ENCODE measurements at regions of chr5 and their contacts with region 1.

Region 1: GRCh38 chr5:61817472-61818326 is 485.6 kb downstream of the ZSWIM6 start:
- DNase-seq: peak in 1 of 2 experiments; percentile 44
- H3K4me3 ChIP-seq: no peak overlapping the region
- H3K4me3 Mint-ChIP-seq: no peak overlapping the region
- H3K27ac Mint-ChIP-seq: no peak overlapping the region
- H3K4me1 ChIP-seq: peaks cover 10% of the 10 kb centered on the region
- H3K4me1 Mint-ChIP-seq: peaks cover 14% of the 10 kb centered on the region
- H3K27me3 ChIP-seq: no peaks in the 10 kb centered on the region; the same call in 1 of the 2 replicates
- H3K27me3 Mint-ChIP-seq: peaks cover 33% of the 10 kb centered on the region
- CTCF ChIP-seq: peak; percentile 73 to 75

Region 2: DNA sequence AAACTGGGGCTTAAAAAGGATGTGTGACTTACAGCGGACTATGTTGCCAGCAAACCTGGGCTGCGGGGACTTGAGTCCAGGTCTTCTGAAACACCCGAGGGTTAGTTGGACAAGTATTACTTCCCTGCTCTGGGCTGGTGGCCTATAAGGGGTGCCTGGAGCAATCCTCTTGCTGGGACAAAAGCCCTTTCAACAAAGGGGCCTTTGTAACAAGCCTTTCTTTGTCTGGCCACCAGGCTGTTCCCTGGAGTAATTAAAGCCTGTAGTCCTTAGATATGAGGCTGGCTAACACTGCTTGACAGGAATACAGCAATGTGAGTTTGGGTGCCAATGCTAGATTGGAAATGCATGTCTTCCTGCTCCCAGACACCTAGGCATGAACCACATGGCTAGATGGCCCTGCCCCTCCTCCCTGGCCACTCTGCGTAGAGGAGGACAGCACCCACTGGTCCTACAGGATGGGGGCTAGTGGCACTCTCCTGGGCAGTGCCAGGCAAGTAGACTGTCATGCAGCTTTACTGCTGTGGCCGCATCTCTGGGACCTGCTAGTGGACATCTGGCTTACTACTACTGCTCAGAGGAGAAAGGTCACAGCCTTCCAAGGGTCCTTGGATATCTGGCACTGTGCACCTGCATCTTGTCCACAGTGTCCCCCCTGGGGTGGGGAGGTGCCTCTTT is 142.5 kb before region 1 on chr5:
- CTCF ChIA-PET with region 1: no interaction called
- POLR2A ChIA-PET with region 1: no interaction called
- intact Hi-C with region 1: loop called (anchors 2 kb)
- DNase-seq: no peak
- H3K4me3 ChIP-seq: no peak overlapping the region
- H3K4me3 Mint-ChIP-seq: no peak overlapping the region
- H3K27ac Mint-ChIP-seq: no peak overlapping the region
- H3K4me1 ChIP-seq: no peaks in the 10 kb centered on the region
- H3K4me1 Mint-ChIP-seq: no peaks in the 10 kb centered on the region
- H3K27me3 ChIP-seq: no peaks in the 10 kb centered on the region
- H3K27me3 Mint-ChIP-seq: peaks cover 10% of the 10 kb centered on the region
- CTCF ChIP-seq: no peak

Region 3: GRCh38 chr5:61768692-61769281 is 48.9 kb before region 1 on chr5:
- CTCF ChIA-PET with region 1: interaction called, 10 read pairs
- POLR2A ChIA-PET with region 1: no interaction called
- intact Hi-C with region 1: loop called (anchors 1 kb)
- DNase-seq: peak; percentile 67 to 76
- H3K4me3 ChIP-seq: no peak overlapping the region
- H3K4me3 Mint-ChIP-seq: no peak overlapping the region
- H3K27ac Mint-ChIP-seq: no peak overlapping the region
- H3K4me1 ChIP-seq: no peaks in the 10 kb centered on the region
- H3K4me1 Mint-ChIP-seq: no peaks in the 10 kb centered on the region
- H3K27me3 ChIP-seq: no peaks in the 10 kb centered on the region
- H3K27me3 Mint-ChIP-seq: peaks cover 21% of the 10 kb centered on the region
- CTCF ChIP-seq: peak; percentile 94 to 100

Region 4: GRCh38 chr5:61802456-61802855 is 15.2 kb before region 1 on chr5:
- CTCF ChIA-PET with region 1: no interaction called
- POLR2A ChIA-PET with region 1: no interaction called
- intact Hi-C with region 1: no loop called
- DNase-seq: no peak
- H3K4me3 ChIP-seq: no peak overlapping the region
- H3K4me3 Mint-ChIP-seq: no peak overlapping the region
- H3K27ac Mint-ChIP-seq: no peak overlapping the region
- H3K4me1 ChIP-seq: peaks cover 9% of the 10 kb centered on the region; the same call in 1 of the 2 replicates
- H3K4me1 Mint-ChIP-seq: peaks cover 9% of the 10 kb centered on the region
- H3K27me3 ChIP-seq: no peaks in the 10 kb centered on the region
- H3K27me3 Mint-ChIP-seq: peaks cover 5% of the 10 kb centered on the region
- CTCF ChIP-seq: no peak

Region 5: GRCh38 chr5:61881821-61882487 is 64.3 kb after region 1 on chr5:
- CTCF ChIA-PET with region 1: no interaction called
- POLR2A ChIA-PET with region 1: no interaction called
- intact Hi-C with region 1: no loop called
- DNase-seq: no peak
- H3K4me3 ChIP-seq: no peak overlapping the region
- H3K4me3 Mint-ChIP-seq: no peak overlapping the region
- H3K27ac Mint-ChIP-seq: no peak overlapping the region
- H3K4me1 ChIP-seq: no peaks in the 10 kb centered on the region
- H3K4me1 Mint-ChIP-seq: no peaks in the 10 kb centered on the region
- H3K27me3 ChIP-seq: no peaks in the 10 kb centered on the region
- H3K27me3 Mint-ChIP-seq: peaks cover 8% of the 10 kb centered on the region
- CTCF ChIP-seq: no peak

Measured in Caco-2 (cell line).